ENCODE measurements at regions of chr10 and their contacts with region 1.

Region 1: GRCh38 chr10:85527616-85528317 is 838.8 kb downstream of the GRID1 start:
- DNase-seq: no peak
- H3K4me3 ChIP-seq: no peak overlapping the region
- H3K27ac ChIP-seq: no peak overlapping the region
- H3K27me3 ChIP-seq: no peaks in the 10 kb centered on the region
- CTCF ChIP-seq: no peak

Region 2: DNA sequence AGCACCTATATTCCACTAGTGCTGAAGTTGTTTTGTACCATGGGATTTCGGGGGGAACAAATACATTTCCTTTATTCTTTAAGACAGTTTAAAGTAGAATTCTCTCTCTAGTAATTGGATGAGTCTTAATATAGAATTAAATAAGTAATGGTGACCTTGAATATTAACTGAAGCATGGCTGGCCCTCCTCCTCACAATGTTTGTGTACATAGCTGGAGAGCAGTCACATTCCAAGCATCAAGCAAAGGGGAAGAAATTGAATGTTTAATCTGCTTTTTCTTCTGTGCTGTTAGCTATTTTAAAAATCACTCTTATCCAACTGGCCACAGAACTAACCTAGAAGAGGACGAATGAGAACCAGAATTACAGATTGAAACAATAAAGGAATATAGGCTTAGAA is 292.5 kb before region 1 on chr10:
- intact Hi-C with region 1: loop called in 1 of 2 experiments (anchors 10 kb)
- DNase-seq: no peak
- H3K4me3 ChIP-seq: no peak overlapping the region
- H3K27ac ChIP-seq: no peak overlapping the region
- H3K27me3 ChIP-seq: peaks cover 0 to 8% (median 0%) of the 10 kb centered on the region in 45 donors
- CTCF ChIP-seq: no peak